Activated T-helper 1 cell treated with anti-CD3 and anti-CD28 coated beads, Interleukin-12 subunit alpha, Interleukin-12 subunit beta, Interleukin-2, Interleukin-4 antibody, amounts not matched to agents 30 ng/mL and 10 ng/mL and 1 ng/mL, durations not matched to agents 14 hours and 24 hours and 36 hours (primary cell): ENCODE measurements at regions of chr20 and their contacts with region 1.

Region 1: GRCh38 chr20:47272893-47273590 is 83.5 kb downstream of the ZMYND8 start:
- DNase-seq: peak; percentile 56
- H3K4me3 Mint-ChIP-seq: peak overlapping the region; percentile 70
- H3K27ac Mint-ChIP-seq: peak overlapping the region; percentile 94
- H3K4me1 Mint-ChIP-seq: peaks cover 50% of the 10 kb centered on the region
- H3K27me3 Mint-ChIP-seq: no peaks in the 10 kb centered on the region

Region 2: GRCh38 chr20:47317127-47317895 is 44.3 kb after region 1 on chr20:
- intact Hi-C with region 1: loop called (anchors 1 kb)
- DNase-seq: peak; percentile 43
- H3K4me3 Mint-ChIP-seq: peak overlapping the region; percentile 51
- H3K27ac Mint-ChIP-seq: peak overlapping the region; percentile 92
- H3K4me1 Mint-ChIP-seq: peaks cover 61% of the 10 kb centered on the region
- H3K27me3 Mint-ChIP-seq: no peaks in the 10 kb centered on the region

Region 3: GRCh38 chr20:47356526-47357295 is 83.7 kb after region 1 on chr20 and contains the start of gene ZMYND8:
- intact Hi-C with region 1: loop called (anchors 1 kb)
- DNase-seq: peak; percentile 96
- H3K4me3 Mint-ChIP-seq: peak within 1 kb of the TSS; percentile 92
- H3K27ac Mint-ChIP-seq: peak within 1 kb of the TSS; percentile 99
- H3K4me1 Mint-ChIP-seq: no peaks in the 10 kb centered on the region
- H3K27me3 Mint-ChIP-seq: no peaks in the 10 kb centered on the region
- total RNA-seq, gene ZMYND8: 42.6 and 43.3 TPM in 2 replicates

Region 4: GRCh38 chr20:47453142-47453782 is 180.2 kb after region 1 on chr20:
- intact Hi-C with region 1: loop called (anchors 1 kb)
- DNase-seq: peak; percentile 47
- H3K4me3 Mint-ChIP-seq: peak overlapping the region; percentile 15
- H3K27ac Mint-ChIP-seq: peak overlapping the region; percentile 70
- H3K4me1 Mint-ChIP-seq: peaks cover 44% of the 10 kb centered on the region
- H3K27me3 Mint-ChIP-seq: no peaks in the 10 kb centered on the region

Region 5: DNA sequence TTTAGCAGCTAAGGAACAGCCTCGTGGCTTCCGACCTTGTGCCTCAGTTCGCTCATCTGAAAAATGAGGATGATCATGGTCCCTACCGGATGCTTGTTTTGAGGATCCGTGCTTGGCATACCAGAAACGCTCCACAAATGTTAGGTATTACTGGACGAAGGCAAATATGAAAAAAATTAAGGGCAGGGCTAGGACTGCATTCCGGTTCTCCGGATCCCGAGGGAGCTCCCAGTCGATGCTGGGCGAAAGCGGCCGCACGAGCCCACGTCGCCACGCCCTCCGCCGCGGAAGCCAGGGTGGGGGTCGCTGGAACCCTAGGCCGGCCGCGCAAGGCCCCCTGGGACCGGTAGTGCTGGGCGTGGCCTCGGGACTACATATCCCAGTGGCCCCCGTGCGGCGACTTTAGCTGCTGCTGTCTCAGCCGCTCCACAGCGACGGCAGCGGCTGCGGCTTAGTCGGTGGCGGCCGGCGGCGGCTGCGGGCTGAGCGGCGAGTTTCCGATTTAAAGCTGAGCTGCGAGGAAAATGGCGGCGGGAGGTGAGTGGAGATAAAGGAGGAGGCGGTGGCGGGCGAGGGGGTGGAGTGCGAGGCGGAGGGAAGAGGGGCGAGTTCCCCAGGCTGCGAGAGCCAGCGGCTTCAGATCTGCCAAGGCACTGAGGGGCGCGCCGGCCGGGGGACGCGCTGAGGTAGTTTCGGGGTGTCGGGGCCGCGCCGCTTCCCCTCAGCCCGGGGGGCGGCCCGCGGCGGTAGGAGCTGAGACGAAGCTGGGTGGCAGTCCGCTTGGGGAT is 228.6 kb after region 1 on chr20 and contains the start of gene NCOA3:
- intact Hi-C with region 1: loop called (anchors 1 kb)
- DNase-seq: peak; percentile 89
- H3K4me3 Mint-ChIP-seq: peak within 1 kb of the TSS; percentile 92
- H3K27ac Mint-ChIP-seq: peak within 1 kb of the TSS; percentile 99
- H3K4me1 Mint-ChIP-seq: peaks cover 61% of the 10 kb centered on the region
- H3K27me3 Mint-ChIP-seq: no peaks in the 10 kb centered on the region
- total RNA-seq, gene NCOA3: 132 and 133 TPM in 2 replicates

Region 6: DNA sequence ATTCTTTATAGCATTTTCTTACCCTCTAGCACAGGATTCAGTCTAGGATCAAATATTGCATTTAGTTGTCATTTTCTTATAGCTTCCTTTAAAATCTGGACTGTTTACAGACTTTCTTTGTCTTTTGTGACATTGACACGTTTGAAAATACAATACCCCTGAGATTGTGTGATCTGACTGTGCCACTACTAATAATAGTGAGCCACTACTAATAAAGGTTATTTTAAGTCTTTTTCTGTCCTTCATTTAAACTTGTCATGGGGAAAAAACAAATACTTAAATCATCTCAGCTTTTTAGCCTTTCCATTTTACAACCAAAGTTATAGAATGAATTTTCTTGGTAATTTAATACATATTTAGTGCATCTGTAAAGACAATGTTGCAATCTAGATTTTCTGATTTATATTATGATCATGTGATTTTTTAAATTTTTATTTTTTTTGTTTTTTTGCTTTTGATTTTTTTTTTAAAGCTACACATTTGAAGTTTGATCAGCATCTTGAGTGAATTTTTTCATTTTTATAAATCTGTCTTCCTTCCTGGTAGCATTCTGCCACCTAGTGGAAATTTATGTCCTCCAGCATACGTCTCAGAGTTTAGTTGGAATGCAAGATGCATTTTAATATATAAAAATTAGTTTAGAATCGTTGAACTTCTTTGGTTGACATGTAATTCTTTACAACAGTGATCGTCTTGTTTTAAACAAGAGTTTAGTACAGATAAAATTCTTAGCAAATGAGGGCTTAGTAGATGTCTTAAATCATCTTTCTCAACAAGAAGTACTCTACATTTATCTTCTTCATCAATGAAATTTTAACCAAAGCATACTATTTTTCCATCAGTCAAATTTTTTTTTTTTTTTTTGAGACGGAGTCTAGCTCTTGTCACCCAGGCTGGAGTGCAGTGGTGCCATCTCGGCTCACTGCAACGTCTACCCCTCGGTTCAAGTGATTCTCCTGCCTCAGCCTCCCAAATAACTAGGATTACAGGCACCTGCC is 348.1 kb after region 1 on chr20:
- intact Hi-C with region 1: loop called (anchors 1 kb)
- DNase-seq: no peak
- H3K4me3 Mint-ChIP-seq: no peak overlapping the region
- H3K27ac Mint-ChIP-seq: peak overlapping the region; percentile 19
- H3K4me1 Mint-ChIP-seq: peaks cover 51% of the 10 kb centered on the region
- H3K27me3 Mint-ChIP-seq: no peaks in the 10 kb centered on the region

Region 7: DNA sequence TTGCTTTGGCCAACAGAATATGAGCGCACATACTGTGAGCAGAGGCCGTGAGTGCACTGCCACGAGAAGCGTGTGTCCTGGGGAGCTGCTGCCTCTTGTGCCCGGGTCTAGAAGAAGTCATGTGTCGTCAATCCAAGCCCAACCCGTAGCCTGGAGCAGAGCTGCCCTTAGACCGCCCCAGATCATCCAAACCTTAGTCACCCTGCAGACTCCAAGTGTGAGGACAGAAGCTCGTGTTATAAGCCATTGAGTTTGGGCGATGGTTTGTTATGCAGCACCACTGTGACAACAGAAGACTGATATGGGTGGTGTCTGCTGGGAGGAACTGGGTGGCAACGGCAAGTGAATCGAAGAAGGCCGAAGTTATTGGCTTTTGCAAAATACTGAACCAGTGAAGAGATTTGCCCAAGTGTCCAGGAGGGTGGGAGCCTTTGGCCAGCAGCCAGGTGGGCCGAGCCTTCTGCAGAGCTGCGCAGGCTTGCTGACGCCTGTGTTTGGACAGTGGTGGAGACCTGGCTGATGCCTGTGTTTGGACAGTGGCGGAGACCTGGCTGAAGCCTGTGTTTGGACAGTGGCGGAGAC is 613.5 kb after region 1 on chr20:
- intact Hi-C with region 1: no loop called
- DNase-seq: no peak
- H3K4me3 Mint-ChIP-seq: no peak overlapping the region
- H3K27ac Mint-ChIP-seq: no peak overlapping the region
- H3K4me1 Mint-ChIP-seq: no peaks in the 10 kb centered on the region
- H3K27me3 Mint-ChIP-seq: peaks cover 3% of the 10 kb centered on the region